ENCODE measurements at regions of chr6 and their contacts with region 1.

Region 1: GRCh38 chr6:84166395-84166794 is 61.0 kb downstream of the CEP162 start:
- DNase-seq: no peak
- ATAC-seq: no peak
- H3K4me3 Mint-ChIP-seq: no peak overlapping the region
- H3K27ac Mint-ChIP-seq: no peak overlapping the region
- H3K4me1 Mint-ChIP-seq: no peaks in the 10 kb centered on the region
- H3K27me3 Mint-ChIP-seq: no peaks in the 10 kb centered on the region
- CTCF ChIP-seq: no peak

Region 2: DNA sequence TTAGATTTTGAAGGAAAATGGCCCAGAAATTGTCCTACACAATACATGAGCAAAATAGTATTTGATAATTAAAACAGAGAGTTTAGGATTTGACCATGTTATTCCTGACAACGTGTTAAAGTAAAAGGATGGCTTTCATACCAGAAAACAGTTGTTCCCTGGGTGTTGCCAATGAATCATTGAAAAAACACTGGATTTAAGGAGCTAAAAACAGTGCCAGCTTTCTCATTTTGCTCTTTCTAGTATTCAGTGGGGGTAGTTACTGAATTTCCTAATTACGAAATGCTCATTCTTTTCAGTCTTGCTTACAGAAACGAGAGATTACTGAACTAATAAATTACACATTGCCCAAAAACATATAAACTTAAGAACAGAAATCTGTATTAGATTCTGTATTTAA is 430.9 kb before region 1 on chr6:
- CTCF ChIA-PET with region 1: no interaction called
- POLR2A ChIA-PET with region 1: no interaction called
- DNase-seq: no peak
- ATAC-seq: no peak
- H3K4me3 Mint-ChIP-seq: no peak overlapping the region
- H3K27ac Mint-ChIP-seq: no peak overlapping the region
- H3K4me1 Mint-ChIP-seq: no peaks in the 10 kb centered on the region
- H3K27me3 Mint-ChIP-seq: peaks cover 4% of the 10 kb centered on the region; the same call in 1 of the 2 replicates
- CTCF ChIP-seq: no peak

Region 3: DNA sequence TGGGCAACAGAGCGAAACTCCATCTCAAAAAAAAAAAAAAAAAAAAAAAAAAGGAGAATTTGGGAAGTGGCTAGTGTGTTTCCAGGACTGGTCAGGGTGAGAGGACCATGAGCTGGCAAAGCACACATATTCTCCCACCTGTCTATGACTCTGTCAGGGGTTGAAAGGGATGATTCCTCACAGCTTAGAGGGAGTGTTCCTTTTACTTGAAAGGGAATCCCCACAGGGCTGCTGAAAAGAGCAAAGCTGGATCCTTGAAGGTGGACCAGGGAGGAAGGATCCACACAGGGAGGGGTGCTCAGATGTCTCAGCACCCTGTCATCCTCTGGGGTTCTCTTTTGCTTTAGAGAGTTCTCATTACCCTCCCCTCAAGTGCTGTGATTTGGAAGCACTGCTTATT is 119.6 kb before region 1 on chr6:
- CTCF ChIA-PET with region 1: no interaction called
- POLR2A ChIA-PET with region 1: interaction called, 12 read pairs
- DNase-seq: no peak
- ATAC-seq: peak; percentile 48
- H3K4me3 Mint-ChIP-seq: no peak overlapping the region
- H3K27ac Mint-ChIP-seq: no peak overlapping the region
- H3K4me1 Mint-ChIP-seq: peaks cover 9% of the 10 kb centered on the region
- H3K27me3 Mint-ChIP-seq: no peaks in the 10 kb centered on the region
- CTCF ChIP-seq: no peak

Region 4: GRCh38 chr6:84191802-84192201 is 25.4 kb after region 1 on chr6:
- CTCF ChIA-PET with region 1: no interaction called
- POLR2A ChIA-PET with region 1: no interaction called
- DNase-seq: no peak
- ATAC-seq: no peak
- H3K4me3 Mint-ChIP-seq: no peak overlapping the region
- H3K27ac Mint-ChIP-seq: no peak overlapping the region
- H3K4me1 Mint-ChIP-seq: no peaks in the 10 kb centered on the region
- H3K27me3 Mint-ChIP-seq: no peaks in the 10 kb centered on the region
- CTCF ChIP-seq: no peak